Dendritic cell treated with granulocyte-macrophage colony-stimulating factor and Interleukin-4, amounts not matched to agents 40 ng/mL and 50 ng/mL, for 4 days (primary cell): ENCODE measurements at regions of chr18 and their contacts with region 1.

Region 1: DNA sequence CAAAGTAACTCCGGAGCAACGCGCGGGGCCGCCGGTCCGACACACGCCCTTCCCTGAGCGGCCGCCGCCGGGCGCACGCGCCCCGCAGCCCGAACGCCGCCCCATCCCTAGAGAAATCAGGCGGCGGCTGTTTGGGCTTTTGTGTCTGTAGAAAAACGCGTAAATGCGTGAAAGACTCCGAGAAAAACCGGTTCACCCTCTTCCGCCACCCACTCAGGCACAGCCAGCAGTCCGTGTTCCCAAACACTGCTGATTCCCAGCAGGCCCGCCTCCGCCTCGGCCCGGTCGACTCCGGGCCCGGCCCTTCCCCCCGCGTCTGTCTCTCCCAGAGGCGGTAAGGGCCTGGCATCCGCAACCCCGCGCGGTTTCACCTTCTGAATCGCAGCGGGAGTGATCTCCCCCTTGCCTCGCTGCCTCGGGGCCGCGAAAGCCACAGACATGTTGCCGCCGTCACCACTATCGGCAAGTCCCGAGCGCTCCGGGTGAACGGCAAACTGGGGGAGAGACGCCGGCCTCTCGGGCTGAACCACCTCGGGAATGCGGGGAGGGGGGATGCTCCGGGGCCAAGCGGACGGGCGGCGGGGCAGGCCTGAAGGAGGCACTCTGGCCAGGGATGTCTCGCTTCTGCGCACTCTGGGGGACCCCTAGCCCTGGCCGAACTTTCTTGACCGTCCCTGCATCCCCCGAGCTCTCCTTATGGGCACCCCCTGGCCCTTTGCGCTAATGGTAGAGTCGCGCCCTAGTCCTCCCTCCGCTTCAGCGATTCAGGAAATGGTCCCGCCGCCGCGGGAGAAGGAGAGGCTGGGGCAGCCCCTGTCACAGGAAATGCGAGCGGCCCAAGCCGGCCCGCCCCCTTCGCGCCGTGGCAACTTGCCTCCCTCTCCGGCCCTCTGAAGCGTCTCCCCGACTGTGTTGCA is at the start of gene SS18:
- H3K4me3 Mint-ChIP-seq: peak within 1 kb of the TSS; percentile 94
- H3K27ac Mint-ChIP-seq: peak within 1 kb of the TSS; percentile 95
- H3K4me1 Mint-ChIP-seq: peaks cover 15% of the 10 kb centered on the region
- H3K27me3 Mint-ChIP-seq: no peaks in the 10 kb centered on the region

Region 2: DNA sequence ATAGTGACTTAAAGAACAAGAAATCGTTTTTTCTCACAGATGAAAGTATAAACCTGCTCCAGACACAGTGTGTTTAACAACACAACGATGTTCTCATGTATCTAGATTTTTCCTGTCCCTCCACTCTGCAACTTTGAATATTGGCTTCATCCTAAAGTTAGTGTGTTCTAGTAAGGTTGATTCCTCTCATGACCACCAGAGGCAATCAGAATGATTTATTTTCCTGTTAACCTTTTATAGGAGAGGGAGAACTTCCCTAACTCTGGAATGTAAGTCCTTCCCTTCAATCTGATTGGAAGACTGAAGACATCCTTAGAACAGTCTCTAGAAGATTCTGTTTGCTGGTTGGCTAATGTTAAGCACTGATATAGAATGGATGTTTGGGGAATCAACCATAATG is 94.9 kb after region 1 on chr18:
- intact Hi-C with region 1: no loop called
- H3K4me3 Mint-ChIP-seq: no peak overlapping the region
- H3K27ac Mint-ChIP-seq: no peak overlapping the region
- H3K4me1 Mint-ChIP-seq: no peaks in the 10 kb centered on the region
- H3K27me3 Mint-ChIP-seq: no peaks in the 10 kb centered on the region

Region 3: GRCh38 chr18:26226229-26227005 is 136.0 kb after region 1 on chr18 and contains the start of gene TAF4B:
- intact Hi-C with region 1: loop called (anchors 2 kb)
- H3K4me3 Mint-ChIP-seq: peak within 1 kb of the TSS; percentile 96
- H3K27ac Mint-ChIP-seq: peak within 1 kb of the TSS; percentile 99
- H3K4me1 Mint-ChIP-seq: peaks cover 18% of the 10 kb centered on the region
- H3K27me3 Mint-ChIP-seq: peaks cover 9% of the 10 kb centered on the region

Region 4: DNA sequence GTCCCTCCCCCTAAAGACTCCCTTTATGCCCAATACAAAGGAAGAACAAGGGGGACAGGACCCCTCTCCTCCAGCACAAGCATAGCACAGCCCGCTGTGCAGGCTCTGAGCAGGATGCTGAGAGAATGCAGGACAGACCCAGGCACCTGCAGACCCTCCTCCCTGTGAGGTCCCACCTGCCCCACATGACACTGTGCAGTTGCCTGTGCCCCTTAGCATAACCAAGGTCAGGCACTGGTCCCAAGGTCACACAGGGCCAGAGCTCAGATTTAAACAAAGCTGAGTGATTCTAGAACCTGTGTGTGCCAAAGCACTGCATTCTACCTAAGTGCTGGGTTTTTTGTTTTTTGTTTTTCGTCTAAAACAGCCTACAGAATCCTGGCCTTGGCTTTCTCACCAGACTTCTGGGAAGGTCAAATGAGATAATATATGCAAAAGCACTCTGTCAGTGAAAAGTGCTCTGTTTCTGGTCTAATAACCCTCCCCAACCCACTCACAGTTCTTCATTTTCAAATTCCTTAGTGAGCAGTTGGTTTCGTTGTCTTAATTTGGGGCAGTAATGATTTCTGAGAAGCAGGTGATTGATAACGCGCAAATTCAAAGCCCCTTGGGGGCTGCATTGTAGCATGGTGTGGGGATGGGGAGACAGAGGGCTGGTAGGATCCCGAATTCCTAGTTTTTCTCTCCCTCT is 332.2 kb after region 1 on chr18:
- intact Hi-C with region 1: no loop called
- H3K4me3 Mint-ChIP-seq: no peak overlapping the region
- H3K27ac Mint-ChIP-seq: no peak overlapping the region
- H3K4me1 Mint-ChIP-seq: no peaks in the 10 kb centered on the region
- H3K27me3 Mint-ChIP-seq: no peaks in the 10 kb centered on the region